Activated naive CD4-positive, alpha-beta T cell treated with anti-CD3 and anti-CD28 coated beads for 36 hours (primary cell): ENCODE measurements at regions of chr1 and their contacts with region 1.

Region 1: GRCh38 chr1:165697881-165698760 is at the start of gene ALDH9A1:
- DNase-seq: peak; percentile 89
- H3K4me3 Mint-ChIP-seq: peak within 1 kb of the TSS; percentile 97
- H3K27ac Mint-ChIP-seq: peak within 1 kb of the TSS; percentile 96
- H3K4me1 Mint-ChIP-seq: peaks cover 26% of the 10 kb centered on the region
- H3K27me3 Mint-ChIP-seq: no peaks in the 10 kb centered on the region
- total RNA-seq, gene ALDH9A1: 35.8 to 43.5 TPM

Region 2: DNA sequence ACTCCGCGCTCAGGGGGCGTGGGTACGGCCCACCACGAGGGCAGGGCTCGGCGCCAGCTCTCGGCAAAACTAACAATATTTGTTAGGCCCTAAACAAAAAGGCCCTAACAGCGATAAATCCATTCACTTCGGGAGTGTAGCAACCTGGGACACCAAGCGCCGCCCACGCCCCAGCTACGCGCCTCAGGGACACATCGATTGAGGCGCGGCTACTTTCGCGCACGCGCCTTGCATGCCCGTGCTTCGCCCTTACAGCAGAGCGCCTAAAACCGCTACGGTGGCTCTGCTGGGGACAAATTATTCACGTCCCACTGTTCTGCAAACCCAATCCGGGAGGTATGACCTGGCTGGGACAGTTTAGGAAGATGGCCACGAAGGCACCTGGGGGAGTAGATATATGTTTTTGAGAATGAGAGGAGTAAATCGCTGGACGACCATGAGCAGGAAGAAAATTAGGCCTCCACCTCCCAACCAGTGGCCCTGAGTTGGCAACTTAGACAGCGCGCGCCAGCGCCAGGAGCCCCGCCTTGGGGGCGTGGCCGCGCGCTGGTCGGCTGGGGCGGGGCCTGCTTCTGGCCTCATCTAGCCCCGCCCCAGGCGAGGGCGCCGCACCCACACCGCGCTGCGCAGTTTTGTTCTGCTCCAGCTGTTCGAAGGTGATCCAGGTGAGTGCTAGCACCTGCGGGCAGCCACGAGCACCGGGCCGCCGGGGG is 67.3 kb before region 1 on chr1 and contains the start of gene MGST3:
- CTCF ChIA-PET with region 1: no interaction called
- intact Hi-C with region 1: loop called (anchors 1 kb)
- DNase-seq: peak; percentile 97
- H3K4me3 Mint-ChIP-seq: no peak within 1 kb of the TSS
- H3K27ac Mint-ChIP-seq: no peak within 1 kb of the TSS
- H3K4me1 Mint-ChIP-seq: peaks cover 19% of the 10 kb centered on the region
- H3K27me3 Mint-ChIP-seq: no peaks in the 10 kb centered on the region
- total RNA-seq, gene MGST3: 26.6 to 29.2 TPM

Region 3: DNA sequence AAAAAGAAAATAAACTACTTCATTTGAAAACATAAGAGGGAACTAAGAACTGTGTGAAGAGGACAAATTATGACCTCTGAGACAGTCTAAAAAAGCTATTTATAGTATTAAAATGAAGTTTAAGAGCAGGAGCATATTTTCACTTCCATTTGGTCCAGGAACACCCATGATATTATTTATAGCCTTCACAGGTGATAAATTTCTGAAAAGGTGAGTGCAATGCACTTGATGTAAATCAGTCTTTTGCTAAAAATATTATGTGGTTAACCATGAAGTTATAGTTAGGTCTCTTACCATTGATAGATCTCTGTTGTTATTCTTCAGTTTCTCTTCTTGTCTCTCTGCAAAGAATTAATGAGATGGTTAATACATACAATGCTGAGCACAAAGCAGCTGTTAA is 55.8 kb after region 1 on chr1:
- CTCF ChIA-PET with region 1: no interaction called
- intact Hi-C with region 1: no loop called
- DNase-seq: no peak
- H3K4me3 Mint-ChIP-seq: no peak overlapping the region
- H3K27ac Mint-ChIP-seq: no peak overlapping the region
- H3K4me1 Mint-ChIP-seq: peaks cover 5% of the 10 kb centered on the region
- H3K27me3 Mint-ChIP-seq: no peaks in the 10 kb centered on the region

Region 4: GRCh38 chr1:165842671-165843129 is 144.6 kb after region 1 on chr1:
- CTCF ChIA-PET with region 1: no interaction called
- intact Hi-C with region 1: loop called (anchors 5 kb)
- DNase-seq: peak; percentile 58
- H3K4me3 Mint-ChIP-seq: no peak overlapping the region
- H3K27ac Mint-ChIP-seq: no peak overlapping the region
- H3K4me1 Mint-ChIP-seq: peaks cover 24% of the 10 kb centered on the region
- H3K27me3 Mint-ChIP-seq: no peaks in the 10 kb centered on the region

Region 5: DNA sequence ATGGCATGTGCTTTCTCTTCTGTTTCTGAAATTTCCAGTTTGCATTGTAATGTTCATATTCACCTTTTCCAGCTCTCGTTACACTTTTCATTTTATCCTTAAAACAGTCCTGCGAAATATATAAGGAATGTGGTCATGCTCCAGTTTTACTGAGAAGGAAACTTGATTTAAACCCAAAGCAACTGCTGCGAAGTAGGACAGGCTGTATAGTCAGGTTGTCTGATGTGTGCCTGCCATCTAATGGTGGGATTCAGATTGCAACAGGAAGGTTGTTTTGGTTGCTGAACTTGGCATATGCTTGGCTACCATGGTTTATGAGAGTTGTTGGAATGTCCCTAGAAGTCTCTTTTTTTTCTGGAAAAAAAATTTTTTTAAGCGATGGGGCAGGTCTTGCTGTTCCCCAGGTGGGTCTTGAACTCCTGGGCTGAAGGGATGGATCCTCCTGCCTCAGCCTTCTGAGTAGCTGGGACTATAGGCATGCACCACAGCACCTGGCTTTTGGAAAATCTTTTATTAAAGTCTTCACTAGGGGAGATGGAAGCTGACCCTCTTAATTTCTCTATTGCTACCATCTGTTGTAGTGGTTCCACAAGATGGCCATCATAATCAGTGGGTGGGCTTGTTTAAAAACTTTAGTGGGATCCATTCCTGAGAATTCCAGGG is 216.1 kb after region 1 on chr1:
- CTCF ChIA-PET with region 1: interaction called, 5 read pairs
- intact Hi-C with region 1: loop called (anchors 1 kb)
- DNase-seq: peak; percentile 82
- H3K4me3 Mint-ChIP-seq: no peak overlapping the region
- H3K27ac Mint-ChIP-seq: no peak overlapping the region
- H3K4me1 Mint-ChIP-seq: no peaks in the 10 kb centered on the region
- H3K27me3 Mint-ChIP-seq: no peaks in the 10 kb centered on the region

Region 6: DNA sequence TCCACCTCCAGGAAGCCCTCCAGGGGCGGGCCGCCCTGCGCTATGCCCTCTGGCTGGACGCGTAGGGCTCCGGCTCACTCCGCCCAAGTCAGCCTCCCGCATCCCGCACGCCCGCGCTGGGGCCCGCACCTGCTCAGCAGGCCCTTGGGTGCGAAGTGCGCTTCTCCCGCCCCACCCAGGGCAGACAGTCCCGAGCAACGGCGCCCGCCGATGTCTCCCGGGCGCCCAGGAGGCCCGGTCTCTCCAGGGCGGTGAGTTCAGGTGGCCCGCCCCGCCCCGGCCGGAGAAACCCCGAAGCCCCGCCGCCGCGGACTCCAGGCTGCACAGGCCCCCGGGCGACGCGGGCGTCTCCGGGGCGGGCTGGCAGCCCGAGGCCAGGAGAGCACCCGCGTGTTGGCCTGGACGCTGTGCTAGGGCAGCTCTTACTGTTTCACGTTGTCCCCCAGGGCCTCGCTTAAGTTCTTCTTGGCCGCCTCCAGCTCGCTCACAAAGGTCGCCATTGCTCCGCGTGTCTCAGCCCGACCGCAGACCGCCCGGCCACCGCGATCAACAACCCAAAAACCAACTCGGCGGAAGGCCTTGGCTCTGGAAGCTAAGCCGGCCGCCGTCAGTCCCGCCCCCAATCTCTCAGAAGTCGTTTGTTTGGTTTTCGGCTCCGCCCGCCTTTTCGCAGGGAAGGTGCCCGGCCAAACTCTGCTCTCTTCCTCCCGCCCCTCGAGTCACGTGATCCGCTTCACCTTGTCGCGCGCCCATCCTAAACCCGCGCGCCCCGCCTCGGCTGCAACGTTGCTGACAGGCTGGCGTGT is 1177.8 kb after region 1 on chr1 and contains the start of gene TADA1:
- CTCF ChIA-PET with region 1: no interaction called
- intact Hi-C with region 1: loop called (anchors 10 kb)
- DNase-seq: peak; percentile 100
- H3K4me3 Mint-ChIP-seq: peak within 1 kb of the TSS; percentile 99
- H3K27ac Mint-ChIP-seq: peak within 1 kb of the TSS; percentile 97
- H3K4me1 Mint-ChIP-seq: peaks cover 37% of the 10 kb centered on the region
- H3K27me3 Mint-ChIP-seq: no peaks in the 10 kb centered on the region
- total RNA-seq, gene TADA1: 19.6 to 19.9 TPM